Dendritic cell treated with granulocyte-macrophage colony-stimulating factor and Interleukin-4, amounts not matched to agents 40 ng/mL and 50 ng/mL, for 4 days (primary cell): ENCODE measurements at regions of chr5 and their contacts with region 1.

Region 1: GRCh38 chr5:95773335-95774059 is 42.4 kb downstream of the RHOBTB3 start:
- H3K4me3 Mint-ChIP-seq: no peak overlapping the region
- H3K27ac Mint-ChIP-seq: peak overlapping the region; percentile 24
- H3K4me1 Mint-ChIP-seq: peaks cover 8% of the 10 kb centered on the region
- H3K27me3 Mint-ChIP-seq: no peaks in the 10 kb centered on the region

Region 2: DNA sequence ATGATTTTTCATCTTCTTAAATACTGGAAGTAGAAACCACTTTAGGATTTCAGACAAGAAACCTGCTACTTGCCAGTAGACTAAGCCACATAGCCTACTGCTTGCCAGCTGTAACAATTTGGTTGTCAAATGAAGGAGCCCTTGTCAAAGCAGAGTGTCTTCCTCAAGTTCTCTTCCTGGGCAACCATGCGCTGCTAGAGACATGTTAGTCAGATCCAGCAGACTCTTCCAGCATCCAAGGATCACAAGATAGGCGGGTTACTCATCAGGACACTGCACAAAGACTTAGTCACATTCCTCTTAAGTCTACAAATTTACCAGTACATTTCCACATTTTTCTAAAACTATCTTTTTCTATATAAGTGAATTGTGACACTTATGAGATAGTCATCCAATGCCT is 243.1 kb before region 1 on chr5:
- intact Hi-C with region 1: no loop called
- H3K4me3 Mint-ChIP-seq: no peak overlapping the region
- H3K27ac Mint-ChIP-seq: no peak overlapping the region
- H3K4me1 Mint-ChIP-seq: no peaks in the 10 kb centered on the region
- H3K27me3 Mint-ChIP-seq: no peaks in the 10 kb centered on the region

Region 3: GRCh38 chr5:95723632-95724364 is 49.7 kb before region 1 on chr5:
- intact Hi-C with region 1: no loop called
- H3K4me3 Mint-ChIP-seq: no peak overlapping the region
- H3K27ac Mint-ChIP-seq: no peak overlapping the region
- H3K4me1 Mint-ChIP-seq: no peaks in the 10 kb centered on the region
- H3K27me3 Mint-ChIP-seq: no peaks in the 10 kb centered on the region

Region 4: DNA sequence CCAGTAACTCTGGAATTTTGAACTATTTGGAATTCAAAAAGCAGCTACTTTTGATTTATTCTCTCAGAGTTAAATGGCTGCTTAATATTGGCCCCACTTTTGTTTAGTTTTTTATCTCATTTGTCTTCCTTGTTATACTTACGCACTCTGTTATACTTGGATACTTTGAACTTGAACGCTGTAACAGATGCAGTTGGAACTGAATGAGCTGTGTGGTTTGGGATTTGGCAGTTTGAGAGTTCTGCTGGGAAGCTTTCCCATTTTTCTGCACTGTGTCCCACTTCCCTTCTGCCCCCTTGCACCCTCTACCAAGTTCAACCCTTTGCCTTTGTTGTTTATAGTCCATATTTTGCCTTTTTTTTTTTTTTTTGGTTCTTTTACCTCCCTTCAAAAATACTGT is 38.6 kb before region 1 on chr5:
- intact Hi-C with region 1: loop called (anchors 5 kb)
- H3K4me3 Mint-ChIP-seq: no peak overlapping the region
- H3K27ac Mint-ChIP-seq: no peak overlapping the region
- H3K4me1 Mint-ChIP-seq: peaks cover 15% of the 10 kb centered on the region
- H3K27me3 Mint-ChIP-seq: peaks cover 19% of the 10 kb centered on the region

Region 5: GRCh38 chr5:96079075-96079474 is 305.6 kb after region 1 on chr5:
- intact Hi-C with region 1: no loop called
- H3K4me3 Mint-ChIP-seq: no peak overlapping the region
- H3K27ac Mint-ChIP-seq: no peak overlapping the region
- H3K4me1 Mint-ChIP-seq: peaks cover 29% of the 10 kb centered on the region
- H3K27me3 Mint-ChIP-seq: no peaks in the 10 kb centered on the region